Prostate gland (tissue), 2 donors: ENCODE measurements at regions of chr11 and their contacts with region 1.

Region 1: GRCh38 chr11:44036811-44037657 is 10.7 kb upstream of the ACCSL start:
- DNase-seq: peak; percentile 39
- H3K4me3 ChIP-seq: no peak overlapping the region
- H3K27ac ChIP-seq: no peak overlapping the region
- H3K4me1 ChIP-seq: no peaks in the 10 kb centered on the region
- H3K27me3 ChIP-seq: no peaks in the 10 kb centered on the region
- CTCF ChIP-seq: peak; percentile 40 to 72 (median 58)
- POLR2A ChIP-seq: no peak

Region 2: DNA sequence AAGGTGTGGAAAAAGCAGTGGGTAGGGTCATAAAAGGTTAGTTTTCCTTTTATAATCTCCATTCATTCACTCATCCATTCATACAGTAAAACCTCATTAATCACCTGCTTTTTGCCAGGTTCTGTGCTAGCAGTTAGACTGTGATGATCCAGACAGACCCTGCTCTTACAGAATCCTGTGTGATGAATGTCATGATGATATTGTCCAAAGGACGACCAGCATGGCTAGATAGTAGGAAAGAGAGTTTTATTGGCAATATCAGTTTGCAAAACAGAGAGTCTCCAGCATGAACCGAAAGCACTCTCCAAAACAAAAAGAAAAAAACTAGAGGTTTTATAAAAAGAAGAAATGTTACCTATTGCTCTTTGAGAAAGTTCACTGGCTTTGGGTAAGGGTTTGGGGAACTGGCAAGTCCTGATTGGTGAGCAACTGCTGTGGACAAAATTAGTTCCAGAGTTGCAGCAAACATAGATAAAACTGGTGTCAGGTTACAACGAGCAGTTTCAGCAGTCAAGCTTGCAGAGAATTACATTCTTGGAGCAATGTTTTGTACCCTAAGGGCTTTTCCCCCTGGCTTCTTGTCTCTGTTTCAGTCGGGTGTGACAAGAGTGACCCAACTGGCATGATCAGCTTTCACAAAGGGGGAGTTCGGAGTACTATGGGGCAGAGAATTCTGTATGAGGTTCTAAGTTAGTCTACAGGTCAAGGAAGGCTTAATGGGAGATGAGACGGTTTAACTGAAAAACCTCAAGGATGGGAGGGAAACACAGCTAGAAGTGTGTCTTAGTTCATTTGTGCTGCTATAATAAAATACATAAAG is 298.2 kb before region 1 on chr11:
- intact Hi-C with region 1: no loop called
- DNase-seq: no peak
- H3K4me3 ChIP-seq: no peak overlapping the region
- H3K27ac ChIP-seq: no peak overlapping the region
- H3K4me1 ChIP-seq: no peaks in the 10 kb centered on the region
- H3K27me3 ChIP-seq: no peaks in the 10 kb centered on the region
- CTCF ChIP-seq: no peak
- POLR2A ChIP-seq: no peak

Region 3: GRCh38 chr11:43895601-43896000 is 141.4 kb before region 1 on chr11:
- intact Hi-C with region 1: loop called (anchors 2 kb)
- DNase-seq: no peak
- H3K4me3 ChIP-seq: no peak overlapping the region
- H3K27ac ChIP-seq: peak overlapping the region in 1 of 2 donors; percentile 61
- H3K4me1 ChIP-seq: peaks cover 9% of the 10 kb centered on the region
- H3K27me3 ChIP-seq: no peaks in the 10 kb centered on the region
- CTCF ChIP-seq: no peak
- POLR2A ChIP-seq: no peak

Region 4: GRCh38 chr11:43944761-43945311 is 92.2 kb before region 1 on chr11:
- intact Hi-C with region 1: loop called (anchors 2 kb)
- DNase-seq: peak; percentile 52
- H3K4me3 ChIP-seq: peak overlapping the region in 1 of 2 donors; percentile 58
- H3K27ac ChIP-seq: peak overlapping the region; percentile 62 to 82
- H3K4me1 ChIP-seq: peaks cover 6% of the 10 kb centered on the region
- H3K27me3 ChIP-seq: no peaks in the 10 kb centered on the region
- CTCF ChIP-seq: peak; percentile 63 to 85 (median 72)
- POLR2A ChIP-seq: no peak

Region 5: GRCh38 chr11:43987384-43988039 is 49.5 kb before region 1 on chr11:
- intact Hi-C with region 1: loop called (anchors 5 kb)
- DNase-seq: no peak
- H3K4me3 ChIP-seq: no peak overlapping the region
- H3K27ac ChIP-seq: no peak overlapping the region
- H3K4me1 ChIP-seq: no peaks in the 10 kb centered on the region
- H3K27me3 ChIP-seq: no peaks in the 10 kb centered on the region
- CTCF ChIP-seq: no peak
- POLR2A ChIP-seq: no peak